Esophagus squamous epithelium (tissue), 5 donors: ENCODE measurements at regions of chr2 and their contacts with region 1.

Region 1: GRCh38 chr2:26964446-26965130 is 5.8 kb upstream of the MAPRE3 start:
- DNase-seq: no peak
- H3K4me3 ChIP-seq: no peak overlapping the region
- H3K27ac ChIP-seq: no peak overlapping the region
- H3K4me1 ChIP-seq: peaks cover 0 to 7% (median 4%) of the 10 kb centered on the region in 3 donors
- H3K27me3 ChIP-seq: peaks cover 0 to 48% (median 0%) of the 10 kb centered on the region in 4 donors
- CTCF ChIP-seq: no peak
- POLR2A ChIP-seq: no peak

Region 2: DNA sequence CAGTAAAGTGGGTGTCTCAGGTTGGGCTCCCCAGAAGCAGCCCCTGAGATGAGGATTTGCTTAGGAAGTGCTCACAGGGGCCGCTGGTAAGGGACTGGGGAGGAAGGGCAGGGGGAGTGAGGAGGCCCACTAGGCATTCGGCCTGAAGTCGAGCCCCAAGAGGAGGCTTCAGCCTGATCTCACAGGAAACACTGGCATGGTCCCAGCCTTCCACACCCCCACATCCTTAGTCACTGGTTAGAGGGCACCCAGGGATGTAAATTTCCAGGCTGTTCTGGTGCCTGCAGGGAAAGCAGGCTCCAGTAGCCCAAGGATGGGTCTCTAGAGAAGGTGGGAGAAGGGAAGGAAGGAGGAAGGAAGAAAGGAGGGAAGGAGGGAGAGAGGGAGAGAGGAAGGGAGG is 294.4 kb before region 1 on chr2:
- intact Hi-C with region 1: no loop called
- DNase-seq: no peak
- H3K4me3 ChIP-seq: no peak overlapping the region
- H3K27ac ChIP-seq: no peak overlapping the region
- H3K4me1 ChIP-seq: no peaks in the 10 kb centered on the region
- H3K27me3 ChIP-seq: peaks cover 0 to 61% (median 0%) of the 10 kb centered on the region in 4 donors
- CTCF ChIP-seq: no peak
- POLR2A ChIP-seq: no peak

Region 3: GRCh38 chr2:26846328-26847306 is 118.0 kb before region 1 on chr2:
- intact Hi-C with region 1: no loop called
- DNase-seq: no peak
- H3K4me3 ChIP-seq: peak overlapping the region in 1 of 4 donors; percentile 13
- H3K27ac ChIP-seq: no peak overlapping the region
- H3K4me1 ChIP-seq: peaks cover 25 to 43% (median 27%) of the 10 kb centered on the region in 3 donors
- H3K27me3 ChIP-seq: peaks cover 38 to 100% (median 41%) of the 10 kb centered on the region in 4 donors
- CTCF ChIP-seq: peak; percentile 58 to 76 (median 66)
- POLR2A ChIP-seq: no peak

Region 4: GRCh38 chr2:27016801-27017325 is 52.3 kb after region 1 on chr2:
- intact Hi-C with region 1: loop called (anchors 5 kb)
- DNase-seq: no peak
- H3K4me3 ChIP-seq: no peak overlapping the region
- H3K27ac ChIP-seq: no peak overlapping the region
- H3K4me1 ChIP-seq: peaks cover 0 to 39% (median 7%) of the 10 kb centered on the region in 3 donors
- H3K27me3 ChIP-seq: no peaks in the 10 kb centered on the region
- CTCF ChIP-seq: peak; percentile 35 to 78 (median 67)
- POLR2A ChIP-seq: no peak

Region 5: GRCh38 chr2:27086090-27086723 is 121.6 kb after region 1 on chr2:
- intact Hi-C with region 1: loop called (anchors 5 kb)
- DNase-seq: peak; percentile 57
- H3K4me3 ChIP-seq: peak overlapping the region; percentile 59 to 75 (median 72)
- H3K27ac ChIP-seq: peak overlapping the region; percentile 86 to 96 (median 90)
- H3K4me1 ChIP-seq: peaks cover 23 to 60% (median 24%) of the 10 kb centered on the region in 3 donors
- H3K27me3 ChIP-seq: no peaks in the 10 kb centered on the region
- CTCF ChIP-seq: peak; percentile 76 to 98 (median 97)
- POLR2A ChIP-seq: peak in 2 of 4 donors; percentile 70 to 74

Region 6: GRCh38 chr2:27855476-27855875 is 890.9 kb after region 1 on chr2:
- intact Hi-C with region 1: no loop called
- DNase-seq: no peak
- H3K4me3 ChIP-seq: no peak overlapping the region
- H3K27ac ChIP-seq: no peak overlapping the region
- H3K4me1 ChIP-seq: peaks cover 0 to 10% (median 1%) of the 10 kb centered on the region in 3 donors
- H3K27me3 ChIP-seq: no peaks in the 10 kb centered on the region
- CTCF ChIP-seq: no peak
- POLR2A ChIP-seq: no peak